Natural killer cell (primary cell): ENCODE measurements at regions of chr20 and their contacts with region 1.

Region 1: GRCh38 chr20:24934101-24934661 is 14.9 kb upstream of the CST7 start:
- DNase-seq: no peak
- ATAC-seq: no peak
- H3K4me3 ChIP-seq: no peak overlapping the region
- H3K4me3 Mint-ChIP-seq: no peak overlapping the region
- H3K27ac ChIP-seq: no peak overlapping the region
- H3K27ac Mint-ChIP-seq: no peak overlapping the region
- H3K4me1 ChIP-seq: peaks cover 34% of the 10 kb centered on the region
- H3K4me1 Mint-ChIP-seq: peaks cover 41 to 46% of the 10 kb centered on the region in 2 donors
- H3K27me3 ChIP-seq: no peaks in the 10 kb centered on the region
- H3K27me3 Mint-ChIP-seq: peaks cover 0 to 2% of the 10 kb centered on the region in 2 donors
- CTCF ChIP-seq: no peak

Region 2: DNA sequence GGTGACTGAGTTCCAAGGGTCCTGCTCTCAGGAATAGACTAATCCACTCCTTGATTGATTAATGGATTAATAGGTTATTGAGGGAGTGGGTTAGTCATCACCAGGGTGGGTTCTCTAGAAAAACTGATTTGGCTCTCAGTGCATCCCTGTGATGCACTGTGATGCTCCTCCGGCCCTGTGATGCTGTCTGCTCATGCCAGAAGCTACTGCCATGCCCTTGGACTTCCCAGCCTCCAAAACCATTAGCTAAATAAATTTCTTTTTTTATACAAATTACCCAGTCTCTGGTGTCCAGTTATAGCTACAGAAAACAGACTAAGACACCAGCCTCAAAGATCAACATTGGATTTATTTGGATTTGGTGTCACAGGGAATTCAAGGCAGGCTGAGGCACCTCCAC is 25.5 kb before region 1 on chr20:
- intact Hi-C with region 1: no loop called
- DNase-seq: no peak
- ATAC-seq: no peak
- H3K4me3 ChIP-seq: no peak overlapping the region
- H3K4me3 Mint-ChIP-seq: no peak overlapping the region
- H3K27ac ChIP-seq: no peak overlapping the region
- H3K27ac Mint-ChIP-seq: no peak overlapping the region
- H3K4me1 ChIP-seq: no peaks in the 10 kb centered on the region
- H3K4me1 Mint-ChIP-seq: no peaks in the 10 kb centered on the region
- H3K27me3 ChIP-seq: no peaks in the 10 kb centered on the region
- H3K27me3 Mint-ChIP-seq: no peaks in the 10 kb centered on the region
- CTCF ChIP-seq: no peak

Region 3: DNA sequence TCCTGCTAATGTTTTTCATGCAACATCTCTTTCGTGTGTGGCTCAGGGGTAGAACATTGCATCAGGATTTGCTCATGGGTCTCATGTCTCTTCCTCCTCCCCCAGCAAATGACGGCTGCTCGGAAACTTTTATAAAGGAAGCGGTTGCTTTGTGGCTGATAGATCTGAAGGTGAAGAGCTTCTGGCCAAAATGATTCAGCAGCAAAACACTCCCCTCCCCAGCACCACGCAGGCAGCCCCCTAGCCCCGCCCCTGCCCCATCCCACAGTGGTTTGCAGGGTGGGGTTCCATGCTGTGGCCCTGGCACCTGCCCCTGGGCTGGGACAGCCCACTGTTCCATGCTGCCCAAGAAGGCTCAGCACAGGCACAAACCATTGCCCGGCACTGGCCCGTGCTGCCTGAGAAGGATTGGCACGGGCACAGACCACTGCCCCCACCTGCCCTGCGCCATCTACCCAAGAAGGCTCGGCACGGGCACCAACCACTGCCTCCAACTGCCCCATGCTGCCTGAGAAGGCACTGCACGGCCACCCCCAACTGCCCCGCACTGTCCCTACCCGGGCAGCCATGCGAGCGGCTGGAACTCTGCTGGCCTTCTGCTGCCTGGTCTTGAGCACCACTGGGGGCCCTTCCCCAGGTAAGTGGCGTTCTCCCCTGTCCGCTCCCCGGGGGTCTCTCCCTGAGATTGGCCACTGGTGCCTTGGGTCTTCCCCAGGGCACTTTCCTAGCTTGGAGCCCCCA is 14.9 kb after region 1 on chr20 and contains the start of gene CST7:
- intact Hi-C with region 1: loop called (anchors 1 kb)
- DNase-seq: peak; percentile 84 to 92
- ATAC-seq: peak; percentile 70 to 88 (median 79)
- H3K4me3 ChIP-seq: peak within 1 kb of the TSS; percentile 88
- H3K4me3 Mint-ChIP-seq: peak within 1 kb of the TSS; percentile 95
- H3K27ac ChIP-seq: peak within 1 kb of the TSS; percentile 98
- H3K27ac Mint-ChIP-seq: peak within 1 kb of the TSS; percentile 98 to 100
- H3K4me1 ChIP-seq: peaks cover 54% of the 10 kb centered on the region
- H3K4me1 Mint-ChIP-seq: peaks cover 74 to 96% of the 10 kb centered on the region in 2 donors
- H3K27me3 ChIP-seq: no peaks in the 10 kb centered on the region
- H3K27me3 Mint-ChIP-seq: no peaks in the 10 kb centered on the region
- CTCF ChIP-seq: no peak
- total RNA-seq, gene CST7: 590 to 700 (median 619) TPM

Region 4: GRCh38 chr20:24960302-24960801 is 26.2 kb after region 1 on chr20:
- intact Hi-C with region 1: loop called (anchors 2 kb)
- DNase-seq: peak in 1 of 2 donors; percentile 39
- ATAC-seq: peak in 2 of 3 donors; percentile 2 to 9
- H3K4me3 ChIP-seq: no peak overlapping the region
- H3K4me3 Mint-ChIP-seq: peak overlapping the region; percentile 84
- H3K27ac ChIP-seq: peak overlapping the region; percentile 99
- H3K27ac Mint-ChIP-seq: peak overlapping the region; percentile 98 to 100
- H3K4me1 ChIP-seq: peaks cover 96% of the 10 kb centered on the region
- H3K4me1 Mint-ChIP-seq: peaks cover 90 to 97% of the 10 kb centered on the region in 2 donors
- H3K27me3 ChIP-seq: no peaks in the 10 kb centered on the region
- H3K27me3 Mint-ChIP-seq: no peaks in the 10 kb centered on the region
- CTCF ChIP-seq: no peak

Region 5: GRCh38 chr20:25057234-25058050 is 123.3 kb after region 1 on chr20:
- intact Hi-C with region 1: loop called (anchors 5 kb)
- DNase-seq: peak; percentile 90 to 93
- ATAC-seq: peak; percentile 62 to 78 (median 76)
- H3K4me3 ChIP-seq: peak overlapping the region; percentile 91
- H3K4me3 Mint-ChIP-seq: peak overlapping the region; percentile 86
- H3K27ac ChIP-seq: peak overlapping the region; percentile 95
- H3K27ac Mint-ChIP-seq: peak overlapping the region; percentile 90
- H3K4me1 ChIP-seq: peaks cover 55% of the 10 kb centered on the region
- H3K4me1 Mint-ChIP-seq: peaks cover 34 to 39% of the 10 kb centered on the region in 2 donors
- H3K27me3 ChIP-seq: no peaks in the 10 kb centered on the region
- H3K27me3 Mint-ChIP-seq: peaks cover under 1% of the 10 kb centered on the region in 2 donors
- CTCF ChIP-seq: no peak